ENCODE measurements at regions of chr5 and their contacts with region 1.

Region 1: DNA sequence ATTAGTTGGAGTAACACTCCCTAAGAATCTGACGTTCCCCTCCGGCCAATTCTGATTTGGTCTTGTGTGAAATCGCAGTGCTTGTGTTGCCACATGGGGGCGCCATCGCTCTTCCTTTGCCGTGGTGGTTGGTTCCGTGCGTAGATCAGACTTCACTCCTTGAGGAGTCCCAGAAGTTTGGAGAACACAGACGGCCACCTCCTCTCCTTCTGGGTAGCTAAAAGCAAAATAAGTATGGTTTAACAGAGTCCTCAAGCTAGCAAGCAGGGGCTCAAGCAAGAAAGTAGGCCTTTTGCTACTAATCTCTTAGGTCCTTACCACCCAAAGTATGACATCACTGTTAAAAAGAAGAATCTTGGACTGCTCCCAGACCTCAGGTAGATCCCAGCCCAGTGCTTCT is 59.5 kb downstream of the HSPA4 start:
- DNase-seq: peak; percentile 91
- H3K4me3 Mint-ChIP-seq: no peak overlapping the region
- H3K27ac Mint-ChIP-seq: no peak overlapping the region
- H3K4me1 Mint-ChIP-seq: peaks cover 18% of the 10 kb centered on the region
- H3K27me3 Mint-ChIP-seq: peaks cover 37% of the 10 kb centered on the region
- CTCF ChIP-seq: peak; percentile 94

Region 2: DNA sequence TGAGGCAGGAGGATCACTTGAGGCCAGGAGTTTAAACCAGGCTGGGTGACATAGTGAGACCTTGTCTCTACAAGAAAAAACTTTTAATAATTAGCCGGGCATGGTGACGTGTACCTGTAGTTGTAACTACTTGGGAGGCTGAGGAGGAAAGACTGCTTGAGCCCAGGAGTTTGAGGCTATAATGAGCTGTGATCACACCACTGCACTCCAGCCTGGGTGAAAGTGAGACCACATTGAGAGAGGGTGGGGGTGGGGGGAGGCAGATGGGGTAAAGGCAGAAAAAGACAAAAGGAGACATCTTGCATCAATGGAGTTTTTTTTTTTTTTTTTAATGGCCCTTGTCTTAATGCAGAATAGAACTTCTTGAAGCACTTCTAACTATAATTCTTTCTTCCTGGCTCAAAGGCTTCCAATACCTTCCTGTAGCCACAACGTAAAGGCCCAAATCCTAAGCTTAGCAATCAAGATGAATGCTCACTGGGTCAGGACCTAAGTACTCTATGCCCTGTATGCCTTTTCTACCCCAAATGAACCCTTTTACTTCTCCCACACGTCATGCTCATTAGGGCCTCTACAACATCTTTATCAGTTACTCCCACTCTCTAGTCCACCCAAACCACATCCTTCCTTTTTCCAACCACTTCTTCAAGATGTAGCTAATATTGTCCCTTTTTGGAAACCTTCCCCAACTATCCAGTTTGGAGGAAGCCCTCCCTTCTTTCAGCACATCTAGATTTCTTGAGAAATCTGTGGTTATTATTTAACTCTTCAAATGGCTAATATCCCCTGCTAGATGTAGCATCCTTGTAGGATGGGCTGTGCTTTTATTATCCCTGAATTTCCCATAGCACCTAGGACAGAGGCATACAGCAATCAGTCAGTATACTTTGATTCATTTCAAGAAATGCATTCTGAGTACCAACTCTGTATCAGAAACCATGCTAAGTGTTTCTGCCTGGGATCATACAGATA is 996.9 kb before region 1 on chr5:
- CTCF ChIA-PET with region 1: no interaction called
- intact Hi-C with region 1: no loop called
- DNase-seq: no peak
- H3K4me3 Mint-ChIP-seq: no peak overlapping the region
- H3K27ac Mint-ChIP-seq: no peak overlapping the region
- H3K4me1 Mint-ChIP-seq: no peaks in the 10 kb centered on the region
- H3K27me3 Mint-ChIP-seq: no peaks in the 10 kb centered on the region
- CTCF ChIP-seq: no peak

Region 3: GRCh38 chr5:133247881-133248624 is 136.8 kb after region 1 on chr5:
- CTCF ChIA-PET with region 1: interaction called, 18 read pairs
- intact Hi-C with region 1: loop called (anchors 1 kb)
- DNase-seq: peak; percentile 76
- H3K4me3 Mint-ChIP-seq: no peak overlapping the region
- H3K27ac Mint-ChIP-seq: no peak overlapping the region
- H3K4me1 Mint-ChIP-seq: peaks cover 41% of the 10 kb centered on the region
- H3K27me3 Mint-ChIP-seq: peaks cover under 1% of the 10 kb centered on the region
- CTCF ChIP-seq: peak; percentile 80

Region 4: DNA sequence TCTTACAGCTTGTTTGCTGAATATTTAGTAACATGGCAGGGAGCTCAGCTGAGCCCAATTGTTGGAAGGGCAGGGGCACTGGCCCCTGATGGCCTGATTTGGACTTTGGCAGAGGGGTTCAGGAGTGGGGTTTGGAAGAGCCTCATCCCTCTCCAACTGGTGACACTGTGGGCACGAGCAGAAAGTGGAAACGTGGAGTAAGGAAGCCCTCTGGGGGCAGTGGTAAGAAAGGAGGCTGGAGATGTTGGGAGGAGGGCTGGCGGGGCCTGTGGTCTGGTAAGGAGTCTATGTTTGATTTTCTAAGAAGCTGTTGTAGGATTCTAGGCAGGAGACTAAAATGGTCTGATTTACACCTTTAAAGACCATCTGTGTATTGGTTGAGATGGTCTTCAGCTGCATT is 149.4 kb after region 1 on chr5:
- CTCF ChIA-PET with region 1: no interaction called
- intact Hi-C with region 1: loop called (anchors 1 kb)
- DNase-seq: no peak
- H3K4me3 Mint-ChIP-seq: no peak overlapping the region
- H3K27ac Mint-ChIP-seq: no peak overlapping the region
- H3K4me1 Mint-ChIP-seq: peaks cover 9% of the 10 kb centered on the region
- H3K27me3 Mint-ChIP-seq: peaks cover 93% of the 10 kb centered on the region
- CTCF ChIP-seq: no peak

Region 5: GRCh38 chr5:133287500-133287899 is 176.2 kb after region 1 on chr5:
- CTCF ChIA-PET with region 1: interaction called, 7 read pairs
- intact Hi-C with region 1: loop called (anchors 1 kb)
- DNase-seq: peak; percentile 80
- H3K4me3 Mint-ChIP-seq: no peak overlapping the region
- H3K27ac Mint-ChIP-seq: no peak overlapping the region
- H3K4me1 Mint-ChIP-seq: no peaks in the 10 kb centered on the region
- H3K27me3 Mint-ChIP-seq: peaks cover 14% of the 10 kb centered on the region
- CTCF ChIP-seq: peak; percentile 61

Region 6: GRCh38 chr5:133460172-133460758 is 349.0 kb after region 1 on chr5:
- CTCF ChIA-PET with region 1: no interaction called
- intact Hi-C with region 1: loop called (anchors 2 kb)
- DNase-seq: peak; percentile 52
- H3K4me3 Mint-ChIP-seq: no peak overlapping the region
- H3K27ac Mint-ChIP-seq: no peak overlapping the region
- H3K4me1 Mint-ChIP-seq: no peaks in the 10 kb centered on the region
- H3K27me3 Mint-ChIP-seq: peaks cover 77% of the 10 kb centered on the region
- CTCF ChIP-seq: peak; percentile 40

Region 7: DNA sequence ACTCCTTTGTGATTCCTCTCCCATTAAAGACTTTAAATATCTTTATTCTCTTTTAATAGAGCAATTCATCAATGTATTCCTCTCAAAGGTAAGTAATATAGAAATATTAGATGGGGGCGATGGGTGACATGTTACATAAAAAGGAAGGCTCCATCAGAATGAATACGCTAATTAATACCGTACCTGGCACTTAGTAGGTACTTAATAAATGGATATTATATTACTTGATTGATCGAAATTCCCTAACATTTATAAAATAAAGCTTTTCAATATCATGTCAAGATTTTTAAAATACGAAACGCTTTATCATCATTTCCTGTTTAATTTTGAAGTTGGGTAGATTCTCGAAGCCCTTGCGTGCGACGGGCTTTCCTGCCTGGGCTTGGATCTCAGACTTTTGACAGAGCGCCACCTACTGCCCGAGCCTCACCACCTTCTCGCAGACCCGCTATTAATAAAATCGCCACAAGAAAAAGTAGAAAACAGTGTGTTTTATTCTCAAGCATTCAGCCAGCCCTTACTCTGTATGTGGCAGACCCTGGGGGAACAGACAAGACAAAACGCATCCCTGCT is 757.7 kb after region 1 on chr5:
- CTCF ChIA-PET with region 1: no interaction called
- intact Hi-C with region 1: loop called (anchors 5 kb)
- DNase-seq: peak; percentile 84
- H3K4me3 Mint-ChIP-seq: no peak overlapping the region
- H3K27ac Mint-ChIP-seq: no peak overlapping the region
- H3K4me1 Mint-ChIP-seq: no peaks in the 10 kb centered on the region
- H3K27me3 Mint-ChIP-seq: peaks cover 63% of the 10 kb centered on the region
- CTCF ChIP-seq: peak; percentile 81